AG04450 (cell line): ENCODE measurements at regions of chr17 and their contacts with region 1.

Region 1: GRCh38 chr17:73031472-73031871 is 61.0 kb downstream of the SLC39A11 start:
- DNase-seq: no peak
- H3K4me3 ChIP-seq: no peak overlapping the region
- H3K27ac ChIP-seq: no peak overlapping the region
- H3K27me3 ChIP-seq: no peaks in the 10 kb centered on the region
- CTCF ChIP-seq: no peak

Region 2: GRCh38 chr17:73007407-73007806 is 24.1 kb before region 1 on chr17:
- CTCF ChIA-PET with region 1: interaction called, 3 read pairs
- POLR2A ChIA-PET with region 1: interaction called, 10 read pairs
- DNase-seq: no peak
- H3K4me3 ChIP-seq: no peak overlapping the region
- H3K27ac ChIP-seq: peak overlapping the region; percentile 47
- H3K27me3 ChIP-seq: no peaks in the 10 kb centered on the region
- CTCF ChIP-seq: no peak

Region 3: GRCh38 chr17:73132085-73132492 is 100.6 kb after region 1 on chr17:
- CTCF ChIA-PET with region 1: no interaction called
- POLR2A ChIA-PET with region 1: no interaction called
- DNase-seq: no peak
- H3K4me3 ChIP-seq: no peak overlapping the region
- H3K27ac ChIP-seq: no peak overlapping the region
- H3K27me3 ChIP-seq: peaks cover 4% of the 10 kb centered on the region
- CTCF ChIP-seq: no peak

Region 4: GRCh38 chr17:73278465-73279453 is 247.3 kb after region 1 on chr17:
- CTCF ChIA-PET with region 1: no interaction called
- POLR2A ChIA-PET with region 1: no interaction called
- DNase-seq: no peak
- H3K4me3 ChIP-seq: no peak overlapping the region
- H3K27ac ChIP-seq: no peak overlapping the region
- H3K27me3 ChIP-seq: no peaks in the 10 kb centered on the region
- CTCF ChIP-seq: no peak